Activated CD4-positive, alpha-beta memory T cell treated with anti-CD3 and anti-CD28 coated beads for 36 hours (primary cell): ENCODE measurements at regions of chr5 and their contacts with region 1.

Region 1: DNA sequence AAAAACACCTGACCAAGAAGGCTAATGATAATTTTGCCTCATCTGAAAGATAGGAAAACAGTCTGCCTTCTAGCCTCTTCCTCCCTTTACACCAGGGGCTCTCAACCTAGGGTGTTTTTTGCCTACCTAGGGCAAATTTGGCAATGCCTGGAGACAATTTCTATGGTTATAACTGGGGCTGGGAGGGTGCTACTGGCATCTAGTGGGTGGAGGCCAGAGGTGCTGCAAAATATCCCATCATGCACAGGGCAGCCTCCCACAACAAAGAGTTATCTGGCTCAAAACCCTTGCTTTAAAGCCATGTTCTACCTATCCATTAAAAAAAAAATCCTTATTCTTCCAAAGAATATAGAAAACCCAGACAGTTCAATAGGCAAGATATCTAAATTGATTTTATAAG is 45.0 kb upstream of the NR3C1 start:
- DNase-seq: peak; percentile 52
- H3K4me3 Mint-ChIP-seq: no peak overlapping the region
- H3K27ac Mint-ChIP-seq: no peak overlapping the region
- H3K4me1 Mint-ChIP-seq: peaks cover 34% of the 10 kb centered on the region
- H3K27me3 Mint-ChIP-seq: no peaks in the 10 kb centered on the region

Region 2: GRCh38 chr5:143390941-143391340 is 57.6 kb before region 1 on chr5:
- CTCF ChIA-PET with region 1: no interaction called
- POLR2A ChIA-PET with region 1: no interaction called
- intact Hi-C with region 1: no loop called
- DNase-seq: no peak
- H3K4me3 Mint-ChIP-seq: no peak overlapping the region
- H3K27ac Mint-ChIP-seq: no peak overlapping the region
- H3K4me1 Mint-ChIP-seq: peaks cover 76% of the 10 kb centered on the region
- H3K27me3 Mint-ChIP-seq: no peaks in the 10 kb centered on the region

Region 3: GRCh38 chr5:143435210-143435657 is 13.3 kb before region 1 on chr5:
- CTCF ChIA-PET with region 1: interaction called, 3 read pairs
- POLR2A ChIA-PET with region 1: interaction called, 6 read pairs
- intact Hi-C with region 1: loop called (anchors 1 kb)
- DNase-seq: peak; percentile 51
- H3K4me3 Mint-ChIP-seq: peak overlapping the region; percentile 81
- H3K27ac Mint-ChIP-seq: peak overlapping the region; percentile 87
- H3K4me1 Mint-ChIP-seq: peaks cover 68% of the 10 kb centered on the region
- H3K27me3 Mint-ChIP-seq: no peaks in the 10 kb centered on the region

Region 4: GRCh38 chr5:143557061-143557818 is 108.7 kb after region 1 on chr5:
- CTCF ChIA-PET with region 1: no interaction called
- POLR2A ChIA-PET with region 1: no interaction called
- intact Hi-C with region 1: loop called (anchors 5 kb)
- DNase-seq: no peak
- H3K4me3 Mint-ChIP-seq: no peak overlapping the region
- H3K27ac Mint-ChIP-seq: peak overlapping the region; percentile 9
- H3K4me1 Mint-ChIP-seq: peaks cover 16% of the 10 kb centered on the region
- H3K27me3 Mint-ChIP-seq: no peaks in the 10 kb centered on the region

Region 5: GRCh38 chr5:143648696-143649095 is 200.2 kb after region 1 on chr5:
- CTCF ChIA-PET with region 1: no interaction called
- POLR2A ChIA-PET with region 1: no interaction called
- intact Hi-C with region 1: loop called (anchors 5 kb)
- DNase-seq: peak; percentile 21
- H3K4me3 Mint-ChIP-seq: no peak overlapping the region
- H3K27ac Mint-ChIP-seq: no peak overlapping the region
- H3K4me1 Mint-ChIP-seq: peaks cover 18% of the 10 kb centered on the region
- H3K27me3 Mint-ChIP-seq: peaks cover 3% of the 10 kb centered on the region